GM13976 (cell line): ENCODE measurements at regions of chr12 and their contacts with region 1.

Region 1: GRCh38 chr12:103884316-103884715 is 43.3 kb upstream of the NT5DC3 start:
- DNase-seq: peak; percentile 62
- CTCF ChIP-seq: peak; percentile 71

Region 2: GRCh38 chr12:104108755-104109445 is 224.6 kb after region 1 on chr12:
- in situ Hi-C with region 1: loop called (anchors 10 kb)
- DNase-seq: peak; percentile 67
- CTCF ChIP-seq: peak; percentile 93